ENCODE measurements at regions of chr19 and their contacts with region 1.

Region 1: GRCh38 chr19:48468775-48469288 is 337 bp upstream of the CYTH2 start:
- DNase-seq: peak; percentile 99
- ATAC-seq: peak; percentile 93
- H3K4me3 Mint-ChIP-seq: peak overlapping the region; percentile 86
- H3K27ac Mint-ChIP-seq: peak overlapping the region; percentile 85
- H3K4me1 Mint-ChIP-seq: peaks cover 23% of the 10 kb centered on the region
- H3K27me3 Mint-ChIP-seq: no peaks in the 10 kb centered on the region

Region 2: GRCh38 chr19:48152551-48152950 is 316.3 kb before region 1 on chr19:
- CTCF ChIA-PET with region 1: no interaction called
- POLR2A ChIA-PET with region 1: no interaction called
- intact Hi-C with region 1: no loop called
- DNase-seq: peak; percentile 80
- ATAC-seq: peak; percentile 53
- H3K4me3 Mint-ChIP-seq: no peak overlapping the region
- H3K27ac Mint-ChIP-seq: no peak overlapping the region
- H3K4me1 Mint-ChIP-seq: no peaks in the 10 kb centered on the region
- H3K27me3 Mint-ChIP-seq: no peaks in the 10 kb centered on the region

Region 3: DNA sequence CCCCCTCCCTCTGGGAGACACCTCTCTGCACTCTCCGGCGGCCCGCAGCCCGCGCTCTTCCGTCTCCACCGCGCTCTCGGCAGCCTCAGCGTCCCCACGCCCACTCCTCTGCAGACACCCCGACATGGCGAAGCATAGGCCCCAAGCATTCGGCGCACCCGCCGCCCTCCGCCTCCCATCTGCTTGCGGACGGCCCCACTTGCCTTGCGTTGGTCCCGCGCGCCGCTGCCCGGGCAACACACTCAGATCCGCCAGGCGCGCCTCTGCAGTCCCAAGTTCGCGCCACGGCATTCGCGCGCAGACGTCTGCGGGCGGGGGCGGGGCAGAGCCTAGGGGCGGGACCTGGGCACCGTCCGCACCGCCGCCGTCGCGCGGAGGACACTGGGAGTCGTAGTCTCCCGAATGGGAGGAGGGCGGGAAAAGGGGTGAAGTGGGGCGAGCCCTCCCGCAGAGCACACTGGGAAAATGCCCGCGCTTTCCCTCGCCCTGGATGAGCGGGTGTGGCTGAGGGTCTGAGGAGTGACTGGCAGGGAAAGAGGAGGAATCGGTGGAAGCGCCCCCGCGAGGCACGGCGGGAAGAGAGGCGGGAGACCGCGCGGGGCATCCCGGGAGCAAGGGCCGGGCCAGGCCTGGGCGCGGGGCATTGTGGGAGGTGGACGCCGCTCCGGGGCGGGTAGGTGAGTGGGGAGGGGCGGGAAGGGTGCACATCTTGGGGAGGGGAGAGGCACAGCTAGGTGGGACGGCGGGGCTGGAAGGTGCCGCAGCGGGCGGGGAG is 298.6 kb before region 1 on chr19 and contains the starts of genes LIG1 and ZSWIM9:
- CTCF ChIA-PET with region 1: no interaction called
- POLR2A ChIA-PET with region 1: no interaction called
- intact Hi-C with region 1: loop called in 1 of 2 experiments (anchors 1 kb)
- DNase-seq: peak; percentile 96
- ATAC-seq: peak; percentile 90
- H3K4me3 Mint-ChIP-seq: peak within 1 kb of the TSS; percentile 79
- H3K27ac Mint-ChIP-seq: peak within 1 kb of the TSS; percentile 95
- H3K4me1 Mint-ChIP-seq: peaks cover 30% of the 10 kb centered on the region
- H3K27me3 Mint-ChIP-seq: no peaks in the 10 kb centered on the region
- total RNA-seq, gene LIG1: 193 to 194 TPM
- total RNA-seq, gene ZSWIM9: 7.4 to 10.9 TPM

Region 4: GRCh38 chr19:48363810-48364563 is 104.8 kb before region 1 on chr19 and contains the starts of genes SYNGR4 and TMEM143:
- CTCF ChIA-PET with region 1: no interaction called
- POLR2A ChIA-PET with region 1: interaction called, 4 read pairs
- intact Hi-C with region 1: loop called (anchors 1 kb)
- DNase-seq: peak; percentile 99
- ATAC-seq: peak; percentile 90
- H3K4me3 Mint-ChIP-seq: peak within 1 kb of the TSS; percentile 84
- H3K27ac Mint-ChIP-seq: peak within 1 kb of the TSS; percentile 95
- H3K4me1 Mint-ChIP-seq: peaks cover 13% of the 10 kb centered on the region
- H3K27me3 Mint-ChIP-seq: no peaks in the 10 kb centered on the region
- total RNA-seq, gene SYNGR4: 0.25 TPM in 1 of 2 experiments, not detected in the other
- total RNA-seq, gene TMEM143: 18.9 to 21.5 TPM

Region 5: GRCh38 chr19:48419158-48419920 is 49.5 kb before region 1 on chr19:
- CTCF ChIA-PET with region 1: no interaction called
- POLR2A ChIA-PET with region 1: no interaction called
- intact Hi-C with region 1: loop called in 1 of 2 experiments (anchors 1 kb)
- DNase-seq: peak; percentile 87
- ATAC-seq: peak; percentile 81
- H3K4me3 Mint-ChIP-seq: peak overlapping the region; percentile 29
- H3K27ac Mint-ChIP-seq: peak overlapping the region; percentile 83
- H3K4me1 Mint-ChIP-seq: peaks cover 21% of the 10 kb centered on the region
- H3K27me3 Mint-ChIP-seq: peaks cover 15% of the 10 kb centered on the region

Region 6: GRCh38 chr19:48492925-48493717 is 24.3 kb after region 1 on chr19:
- CTCF ChIA-PET with region 1: interaction called, 11 read pairs
- POLR2A ChIA-PET with region 1: no interaction called
- intact Hi-C with region 1: loop called (anchors 1 to 2 kb)
- DNase-seq: peak; percentile 98
- ATAC-seq: peak; percentile 81
- H3K4me3 Mint-ChIP-seq: peak overlapping the region; percentile 68
- H3K27ac Mint-ChIP-seq: peak overlapping the region; percentile 42
- H3K4me1 Mint-ChIP-seq: peaks cover 30% of the 10 kb centered on the region
- H3K27me3 Mint-ChIP-seq: peaks cover 39% of the 10 kb centered on the region

Region 7: DNA sequence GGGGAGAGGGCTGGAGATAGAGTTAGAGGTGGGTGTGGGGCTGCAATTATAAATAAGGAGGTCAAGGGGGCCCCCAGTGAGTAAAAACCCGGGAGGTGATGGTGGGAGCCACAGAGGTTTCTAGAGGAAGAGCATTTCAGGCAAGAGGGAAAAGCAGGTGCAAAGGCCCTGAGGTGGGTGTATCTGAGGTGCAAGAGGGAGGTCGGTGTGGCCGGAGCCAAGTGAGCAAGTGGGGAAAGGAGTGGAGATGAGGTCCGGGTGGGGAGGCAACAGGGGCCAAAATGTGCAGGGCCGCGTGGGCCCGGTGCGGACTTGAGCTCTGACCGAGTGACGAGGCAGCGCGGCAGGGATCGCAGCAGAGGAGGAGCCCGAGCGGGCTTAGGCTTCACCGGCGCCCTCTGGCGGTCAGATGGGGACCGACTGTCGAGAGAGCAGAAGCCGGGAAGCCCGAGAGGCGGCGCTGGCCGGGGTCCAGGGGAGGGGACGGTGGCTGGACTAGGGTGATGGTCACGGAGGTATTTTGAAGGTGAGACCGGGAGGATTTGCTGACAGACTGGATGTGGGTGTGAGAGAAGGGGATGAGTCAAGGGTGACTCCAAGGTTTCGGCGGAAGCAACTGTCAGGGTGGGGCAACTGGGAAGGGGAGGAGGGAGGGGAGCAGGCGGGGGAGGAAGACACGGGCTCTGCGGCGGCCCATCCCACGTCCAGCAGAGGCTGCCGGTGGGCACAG is 120.0 kb after region 1 on chr19:
- CTCF ChIA-PET with region 1: interaction called, 4 read pairs
- POLR2A ChIA-PET with region 1: no interaction called
- intact Hi-C with region 1: loop called in 1 of 2 experiments (anchors 1 kb)
- DNase-seq: peak; percentile 94
- ATAC-seq: peak; percentile 89
- H3K4me3 Mint-ChIP-seq: peak overlapping the region; percentile 35
- H3K27ac Mint-ChIP-seq: peak overlapping the region; percentile 43
- H3K4me1 Mint-ChIP-seq: peaks cover 15% of the 10 kb centered on the region
- H3K27me3 Mint-ChIP-seq: no peaks in the 10 kb centered on the region

Region 8: GRCh38 chr19:48899781-48900476 is 431.1 kb after region 1 on chr19 and contains the start of gene NUCB1:
- CTCF ChIA-PET with region 1: no interaction called
- POLR2A ChIA-PET with region 1: no interaction called
- intact Hi-C with region 1: loop called in 1 of 2 experiments (anchors 1 kb)
- DNase-seq: peak; percentile 100
- ATAC-seq: peak; percentile 95
- H3K4me3 Mint-ChIP-seq: peak within 1 kb of the TSS; percentile 99
- H3K27ac Mint-ChIP-seq: peak within 1 kb of the TSS; percentile 98
- H3K4me1 Mint-ChIP-seq: peaks cover 34% of the 10 kb centered on the region
- H3K27me3 Mint-ChIP-seq: peaks cover 5% of the 10 kb centered on the region
- total RNA-seq, gene NUCB1: 115 to 118 TPM

Measured in activated CD4-positive, alpha-beta T cell treated with anti-CD3 and anti-CD28 coated beads for 36 hours (primary cell).